Caco-2 (cell line): ENCODE measurements at regions of chr10 and their contacts with region 1.

Region 1: DNA sequence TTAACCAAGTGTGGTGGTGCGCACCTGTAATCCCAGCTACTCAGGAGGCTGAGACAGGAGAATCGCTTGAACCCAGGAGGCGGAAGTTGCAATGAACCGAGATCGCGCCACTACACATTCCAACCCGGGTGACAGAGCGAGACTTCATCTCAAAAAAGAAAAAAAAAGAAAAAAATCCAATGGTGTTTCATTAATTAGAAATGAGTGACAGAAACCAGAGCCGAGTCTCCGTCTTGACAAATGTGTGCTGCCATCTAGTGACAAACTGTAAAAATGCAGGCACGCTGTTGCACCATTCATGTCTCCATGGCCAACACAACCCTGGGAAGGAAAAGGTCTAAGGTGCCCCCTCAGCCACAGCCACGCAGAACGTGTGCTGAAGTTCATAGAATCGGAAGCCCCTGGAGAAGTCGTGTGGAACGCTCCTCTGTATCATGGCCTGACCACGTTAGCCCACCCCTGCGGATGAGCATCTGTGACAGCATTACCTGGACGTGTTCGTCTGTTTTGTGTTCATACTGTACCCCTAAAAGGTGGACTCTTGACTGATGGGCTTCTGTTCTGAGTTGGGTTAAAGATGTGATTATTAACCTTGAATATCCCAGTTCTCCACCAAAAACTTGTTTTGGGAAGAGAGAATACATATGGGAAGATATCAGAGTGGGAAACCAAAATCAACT is 94.9 kb downstream of the LYZL2 start:
- DNase-seq: peak; percentile 84 to 85
- H3K4me3 ChIP-seq: no peak overlapping the region
- H3K4me3 Mint-ChIP-seq: peak overlapping the region; percentile 13
- H3K27ac Mint-ChIP-seq: peak overlapping the region; percentile 34
- H3K4me1 ChIP-seq: peaks cover 41% of the 10 kb centered on the region
- H3K4me1 Mint-ChIP-seq: peaks cover 48% of the 10 kb centered on the region
- H3K27me3 ChIP-seq: no peaks in the 10 kb centered on the region
- H3K27me3 Mint-ChIP-seq: no peaks in the 10 kb centered on the region
- CTCF ChIP-seq: peak; percentile 89 to 91

Region 2: GRCh38 chr10:29735596-29736318 is 798.8 kb before region 1 on chr10:
- CTCF ChIA-PET with region 1: no interaction called
- POLR2A ChIA-PET with region 1: no interaction called
- intact Hi-C with region 1: no loop called
- DNase-seq: peak; percentile 93 to 99
- H3K4me3 ChIP-seq: peak overlapping the region; percentile 75
- H3K4me3 Mint-ChIP-seq: peak overlapping the region; percentile 91
- H3K27ac Mint-ChIP-seq: peak overlapping the region; percentile 62
- H3K4me1 ChIP-seq: peaks cover 30% of the 10 kb centered on the region
- H3K4me1 Mint-ChIP-seq: peaks cover 21% of the 10 kb centered on the region
- H3K27me3 ChIP-seq: no peaks in the 10 kb centered on the region
- H3K27me3 Mint-ChIP-seq: no peaks in the 10 kb centered on the region
- CTCF ChIP-seq: peak; percentile 98 to 99

Region 3: GRCh38 chr10:30413996-30414576 is 120.5 kb before region 1 on chr10:
- CTCF ChIA-PET with region 1: interaction called, 10 read pairs
- POLR2A ChIA-PET with region 1: interaction called, 3 read pairs
- intact Hi-C with region 1: loop called (anchors 1 kb)
- DNase-seq: peak in 1 of 2 experiments; percentile 77
- H3K4me3 ChIP-seq: no peak overlapping the region
- H3K4me3 Mint-ChIP-seq: no peak overlapping the region
- H3K27ac Mint-ChIP-seq: no peak overlapping the region
- H3K4me1 ChIP-seq: peaks cover 15% of the 10 kb centered on the region
- H3K4me1 Mint-ChIP-seq: peaks cover 14% of the 10 kb centered on the region
- H3K27me3 ChIP-seq: no peaks in the 10 kb centered on the region
- H3K27me3 Mint-ChIP-seq: no peaks in the 10 kb centered on the region
- CTCF ChIP-seq: peak; percentile 91 to 94

Region 4: DNA sequence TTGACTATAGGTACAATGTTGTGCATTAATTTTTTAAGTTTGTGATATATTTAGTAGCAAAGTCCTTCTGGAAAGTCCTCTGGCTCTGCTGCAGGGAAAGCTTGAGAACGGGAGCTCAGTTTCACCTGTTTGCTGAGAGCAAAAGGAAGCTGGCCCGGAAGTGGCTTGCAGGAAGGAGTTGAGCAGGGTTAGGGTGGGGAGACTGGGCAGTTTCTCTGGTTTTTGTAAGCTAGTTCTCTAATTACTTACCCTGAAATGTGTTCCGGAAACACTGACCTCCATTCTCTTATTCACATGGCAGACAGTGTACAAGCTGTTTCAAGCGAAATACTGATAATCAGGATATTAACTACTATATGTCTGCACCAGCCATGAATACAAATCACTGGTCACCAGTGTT is 78.3 kb before region 1 on chr10:
- CTCF ChIA-PET with region 1: no interaction called
- POLR2A ChIA-PET with region 1: no interaction called
- intact Hi-C with region 1: no loop called
- DNase-seq: no peak
- H3K4me3 ChIP-seq: no peak overlapping the region
- H3K4me3 Mint-ChIP-seq: no peak overlapping the region
- H3K27ac Mint-ChIP-seq: no peak overlapping the region
- H3K4me1 ChIP-seq: peaks cover 11% of the 10 kb centered on the region
- H3K4me1 Mint-ChIP-seq: no peaks in the 10 kb centered on the region
- H3K27me3 ChIP-seq: no peaks in the 10 kb centered on the region
- H3K27me3 Mint-ChIP-seq: no peaks in the 10 kb centered on the region
- CTCF ChIP-seq: no peak

Region 5: GRCh38 chr10:30519639-30520038 is 15.0 kb before region 1 on chr10:
- CTCF ChIA-PET with region 1: no interaction called
- POLR2A ChIA-PET with region 1: no interaction called
- intact Hi-C with region 1: loop called (anchors 1 kb)
- DNase-seq: no peak
- H3K4me3 ChIP-seq: no peak overlapping the region
- H3K4me3 Mint-ChIP-seq: no peak overlapping the region
- H3K27ac Mint-ChIP-seq: no peak overlapping the region
- H3K4me1 ChIP-seq: peaks cover 24% of the 10 kb centered on the region
- H3K4me1 Mint-ChIP-seq: peaks cover 18% of the 10 kb centered on the region
- H3K27me3 ChIP-seq: no peaks in the 10 kb centered on the region
- H3K27me3 Mint-ChIP-seq: no peaks in the 10 kb centered on the region
- CTCF ChIP-seq: no peak

Region 6: GRCh38 chr10:30583778-30584415 is 49.3 kb after region 1 on chr10:
- CTCF ChIA-PET with region 1: interaction called, 4 read pairs
- POLR2A ChIA-PET with region 1: no interaction called
- intact Hi-C with region 1: loop called (anchors 2 kb)
- DNase-seq: no peak
- H3K4me3 ChIP-seq: no peak overlapping the region
- H3K4me3 Mint-ChIP-seq: peak overlapping the region; percentile 16
- H3K27ac Mint-ChIP-seq: no peak overlapping the region
- H3K4me1 ChIP-seq: no peaks in the 10 kb centered on the region
- H3K4me1 Mint-ChIP-seq: peaks cover 6% of the 10 kb centered on the region
- H3K27me3 ChIP-seq: no peaks in the 10 kb centered on the region
- H3K27me3 Mint-ChIP-seq: no peaks in the 10 kb centered on the region
- CTCF ChIP-seq: no peak